ENCODE measurements at regions of chr1 and their contacts with region 1.

Region 1: GRCh38 chr1:84433258-84434080 is 35.2 kb downstream of the DNASE2B start:
- DNase-seq: peak; percentile 31
- ATAC-seq: peak; percentile 75 to 82

Region 2: DNA sequence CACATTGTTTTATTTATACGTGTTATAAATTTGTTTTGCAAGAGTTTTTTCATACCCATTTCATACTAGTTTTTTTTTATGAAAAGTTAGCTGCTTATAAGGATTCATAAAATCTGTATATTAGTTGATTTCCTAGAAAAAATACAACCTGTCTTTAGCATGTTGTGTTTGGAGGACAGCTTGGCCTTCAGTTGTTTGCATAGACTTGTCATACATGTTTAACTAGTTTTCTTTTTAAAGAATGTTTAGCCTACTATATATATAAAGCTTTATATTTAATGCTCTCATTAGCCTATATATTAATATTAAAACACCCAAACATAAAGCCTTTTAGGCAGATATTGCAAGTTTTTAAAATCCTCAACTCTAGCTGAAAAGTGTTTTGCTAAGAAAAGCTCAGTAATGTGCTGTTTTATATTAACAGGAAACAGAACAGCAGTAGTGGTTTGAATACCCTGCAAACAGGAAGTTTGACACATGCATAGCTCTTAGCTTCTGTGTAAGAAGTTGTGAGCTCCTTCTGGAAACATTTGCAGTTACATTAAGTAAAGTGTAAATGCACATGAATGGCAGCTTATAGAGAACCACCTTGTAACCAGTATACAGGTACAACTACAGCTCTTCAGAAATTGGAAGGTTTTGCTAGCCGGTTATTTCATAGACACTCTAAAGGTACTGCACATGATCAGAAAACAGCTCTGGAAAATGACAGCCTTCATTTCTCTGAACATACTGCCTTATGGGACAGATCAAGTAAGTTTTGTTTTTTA is 289.5 kb before region 1 on chr1 and contains the start of gene PRKACB:
- intact Hi-C with region 1: loop called (anchors 2 to 10 kb)
- DNase-seq: no peak
- ATAC-seq: peak; percentile 41 to 65
- total RNA-seq, gene PRKACB: 44.4 to 44.5 TPM

Region 3: DNA sequence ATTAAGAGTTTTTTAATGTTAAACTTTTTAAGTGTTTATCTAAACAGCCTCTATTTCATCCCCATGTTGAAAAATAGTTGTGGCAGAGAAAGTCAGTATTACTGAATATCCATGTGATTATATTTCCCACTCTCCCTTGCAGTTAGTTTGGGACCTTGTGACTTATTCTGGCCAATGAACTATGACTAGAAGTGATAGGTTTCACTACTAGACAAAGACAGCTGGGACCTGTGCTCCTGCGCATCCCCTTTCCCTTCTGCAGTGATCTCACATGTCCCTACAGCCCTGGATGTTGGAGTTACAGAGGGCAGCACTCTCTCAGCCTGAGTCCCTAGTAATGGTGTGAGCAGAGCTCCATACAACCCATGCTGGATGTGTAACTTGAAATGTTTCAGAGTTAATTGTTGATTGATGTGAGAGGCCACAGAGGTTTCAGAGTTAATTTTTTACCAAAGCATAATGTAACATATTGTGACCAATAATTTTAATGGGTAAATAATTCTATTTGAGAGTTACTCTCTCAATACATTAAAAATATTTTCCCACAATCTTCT is 150.6 kb before region 1 on chr1:
- intact Hi-C with region 1: no loop called
- DNase-seq: no peak
- ATAC-seq: no peak

Region 4: GRCh38 chr1:84298328-84298683 is 135.2 kb before region 1 on chr1:
- intact Hi-C with region 1: loop called in 1 of 2 experiments (anchors 2 kb)
- DNase-seq: peak; percentile 65
- ATAC-seq: peak; percentile 89 to 91